MCF 10A (cell line): ENCODE measurements at regions of chr1 and their contacts with region 1.

Region 1: DNA sequence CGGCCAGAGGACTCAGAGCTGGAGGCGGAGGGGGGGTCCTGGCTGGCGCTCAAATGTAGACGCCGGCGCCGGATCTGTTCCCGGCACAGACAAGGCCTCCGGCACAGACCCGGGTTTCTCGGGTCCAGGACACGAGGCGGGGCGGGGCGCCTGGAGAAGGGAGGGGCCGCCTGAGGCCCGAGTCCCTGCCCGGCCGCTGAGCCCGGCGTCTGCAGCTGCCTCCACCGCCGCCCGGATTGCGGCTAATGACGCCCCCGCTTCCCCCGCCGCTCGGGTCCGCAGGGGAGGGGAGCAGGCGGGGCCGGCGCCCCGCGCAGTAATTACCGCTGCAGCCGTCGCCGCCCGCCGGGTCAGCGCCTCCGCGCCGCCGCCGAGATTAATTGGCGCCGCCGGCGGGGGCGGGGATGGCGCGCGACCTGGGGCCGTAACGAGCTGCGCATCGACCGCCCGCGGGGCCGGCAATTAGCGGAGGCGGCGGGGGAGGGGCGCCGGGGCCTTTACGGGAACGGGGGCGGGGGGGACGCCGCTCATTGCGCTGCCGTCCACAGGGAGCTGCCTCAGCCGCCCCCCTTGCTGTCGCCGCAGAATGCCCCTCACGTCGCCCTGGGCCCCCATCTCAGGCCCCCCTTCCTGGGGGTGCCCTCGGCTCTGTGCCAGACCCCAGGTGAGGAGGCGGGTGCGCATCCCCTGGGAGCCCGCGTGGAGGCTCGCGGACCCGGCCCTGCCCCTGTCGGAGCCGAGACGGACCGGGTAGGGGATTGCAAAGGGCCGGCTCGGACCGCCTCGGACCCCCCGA is 17.3 kb downstream of the NOC2L start:
- DNase-seq: peak; percentile 71
- H3K4me3 Mint-ChIP-seq: peak overlapping the region; percentile 60
- H3K27ac Mint-ChIP-seq: no peak overlapping the region
- H3K4me1 Mint-ChIP-seq: no peaks in the 10 kb centered on the region
- H3K27me3 Mint-ChIP-seq: no peaks in the 10 kb centered on the region
- CTCF ChIP-seq: no peak

Region 2: GRCh38 chr1:861714-862113 is 80.1 kb before region 1 on chr1:
- CTCF ChIA-PET with region 1: no interaction called
- POLR2A ChIA-PET with region 1: no interaction called
- intact Hi-C with region 1: no loop called
- DNase-seq: no peak
- H3K4me3 Mint-ChIP-seq: no peak overlapping the region
- H3K27ac Mint-ChIP-seq: no peak overlapping the region
- H3K4me1 Mint-ChIP-seq: peaks cover 9% of the 10 kb centered on the region
- H3K27me3 Mint-ChIP-seq: peaks cover 40% of the 10 kb centered on the region
- CTCF ChIP-seq: no peak

Region 3: GRCh38 chr1:928825-929661 is 12.7 kb before region 1 on chr1:
- CTCF ChIA-PET with region 1: interaction called, 18 read pairs
- POLR2A ChIA-PET with region 1: interaction called, 3 read pairs
- intact Hi-C with region 1: no loop called
- DNase-seq: no peak
- H3K4me3 Mint-ChIP-seq: no peak overlapping the region
- H3K27ac Mint-ChIP-seq: no peak overlapping the region
- H3K4me1 Mint-ChIP-seq: no peaks in the 10 kb centered on the region
- H3K27me3 Mint-ChIP-seq: peaks cover 39% of the 10 kb centered on the region
- CTCF ChIP-seq: no peak